ENCODE measurements at regions of chr12 and their contacts with region 1.

Region 1: GRCh38 chr12:116135209-116135930 is 142.1 kb downstream of the MED13L start:
- DNase-seq: peak; percentile 87
- H3K4me3 ChIP-seq: no peak overlapping the region
- H3K27ac ChIP-seq: peak overlapping the region; percentile 32
- H3K4me1 ChIP-seq: peaks cover 31% of the 10 kb centered on the region
- H3K27me3 ChIP-seq: no peaks in the 10 kb centered on the region
- CTCF ChIP-seq: no peak
- POLR2A ChIP-seq: no peak

Region 2: DNA sequence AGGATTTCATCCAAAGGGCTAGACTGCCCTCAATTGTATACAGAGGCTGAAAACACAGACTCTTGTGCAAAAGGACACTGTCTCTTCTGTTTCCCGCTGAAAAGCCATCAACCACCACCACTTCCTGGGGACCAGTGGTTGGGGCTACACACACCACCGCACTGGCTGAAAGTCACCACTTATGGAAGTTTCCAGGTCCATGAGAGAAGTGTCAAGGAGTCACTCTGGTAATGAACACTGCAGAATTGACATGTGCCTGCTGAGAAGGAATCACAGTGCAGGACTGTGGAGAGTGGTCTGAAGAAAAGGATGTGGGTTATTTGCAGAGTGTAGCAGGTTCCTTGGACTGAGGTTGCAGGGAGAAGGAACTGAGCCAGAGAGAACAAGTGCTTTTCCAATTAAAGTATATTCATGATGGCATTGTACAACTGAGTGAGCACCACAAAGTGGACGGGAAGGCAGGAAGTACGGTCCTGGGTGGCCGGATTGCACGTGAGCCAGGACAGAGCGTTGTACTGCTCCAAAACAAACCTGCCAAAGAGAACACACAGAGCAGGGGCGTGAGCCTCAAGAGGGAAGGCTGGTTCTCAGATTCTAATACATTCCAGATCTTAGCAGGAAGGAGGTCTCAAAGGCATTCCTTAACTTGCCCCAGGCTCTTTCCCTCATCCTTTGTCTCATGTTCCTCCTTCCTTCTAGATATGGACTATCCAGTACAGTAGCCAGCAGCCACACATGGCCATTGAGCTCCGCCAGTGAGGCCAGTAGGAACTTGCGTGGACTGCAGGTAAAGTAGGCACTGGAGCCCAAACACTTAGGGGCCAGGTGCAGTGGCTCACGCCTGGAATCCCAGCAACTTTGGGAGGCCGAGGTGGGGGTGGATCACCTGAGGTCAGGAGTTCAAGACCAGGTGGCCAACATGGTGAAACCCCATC is 174.2 kb before region 1 on chr12:
- CTCF ChIA-PET with region 1: no interaction called
- POLR2A ChIA-PET with region 1: no interaction called
- dilution Hi-C with region 1: no loop called
- intact Hi-C with region 1: no loop called
- DNase-seq: no peak
- H3K4me3 ChIP-seq: no peak overlapping the region
- H3K27ac ChIP-seq: no peak overlapping the region
- H3K4me1 ChIP-seq: no peaks in the 10 kb centered on the region
- H3K27me3 ChIP-seq: no peaks in the 10 kb centered on the region
- CTCF ChIP-seq: no peak
- POLR2A ChIP-seq: no peak

Region 3: GRCh38 chr12:115973968-115974724 is 161.2 kb before region 1 on chr12:
- CTCF ChIA-PET with region 1: no interaction called
- POLR2A ChIA-PET with region 1: no interaction called
- dilution Hi-C with region 1: no loop called
- intact Hi-C with region 1: no loop called
- DNase-seq: peak; percentile 58
- H3K4me3 ChIP-seq: no peak overlapping the region
- H3K27ac ChIP-seq: peak overlapping the region; percentile 17
- H3K4me1 ChIP-seq: peaks cover 20% of the 10 kb centered on the region
- H3K27me3 ChIP-seq: no peaks in the 10 kb centered on the region
- CTCF ChIP-seq: no peak
- POLR2A ChIP-seq: no peak

Region 4: GRCh38 chr12:115998119-115998633 is 137.2 kb before region 1 on chr12:
- CTCF ChIA-PET with region 1: interaction called, 7 read pairs
- POLR2A ChIA-PET with region 1: no interaction called
- dilution Hi-C with region 1: no loop called
- intact Hi-C with region 1: loop called (anchors 5 kb)
- DNase-seq: peak; percentile 70
- H3K4me3 ChIP-seq: no peak overlapping the region
- H3K27ac ChIP-seq: peak overlapping the region; percentile 34
- H3K4me1 ChIP-seq: no peaks in the 10 kb centered on the region
- H3K27me3 ChIP-seq: no peaks in the 10 kb centered on the region
- CTCF ChIP-seq: peak; percentile 47 to 52
- POLR2A ChIP-seq: no peak

Region 5: GRCh38 chr12:116559162-116559935 is 424.0 kb after region 1 on chr12 and contains the start of gene MAP1LC3B2:
- CTCF ChIA-PET with region 1: no interaction called
- POLR2A ChIA-PET with region 1: no interaction called
- dilution Hi-C with region 1: no loop called
- intact Hi-C with region 1: no loop called
- DNase-seq: no peak
- H3K4me3 ChIP-seq: no peak within 1 kb of the TSS
- H3K27ac ChIP-seq: no peak within 1 kb of the TSS
- H3K4me1 ChIP-seq: no peaks in the 10 kb centered on the region
- H3K27me3 ChIP-seq: no peaks in the 10 kb centered on the region
- CTCF ChIP-seq: no peak
- POLR2A ChIP-seq: no peak
- total RNA-seq, gene MAP1LC3B2: 4.1 TPM in 1 of 2 replicates, not detected in the other